ENCODE measurements at regions of chr18 and their contacts with region 1.

Region 1: DNA sequence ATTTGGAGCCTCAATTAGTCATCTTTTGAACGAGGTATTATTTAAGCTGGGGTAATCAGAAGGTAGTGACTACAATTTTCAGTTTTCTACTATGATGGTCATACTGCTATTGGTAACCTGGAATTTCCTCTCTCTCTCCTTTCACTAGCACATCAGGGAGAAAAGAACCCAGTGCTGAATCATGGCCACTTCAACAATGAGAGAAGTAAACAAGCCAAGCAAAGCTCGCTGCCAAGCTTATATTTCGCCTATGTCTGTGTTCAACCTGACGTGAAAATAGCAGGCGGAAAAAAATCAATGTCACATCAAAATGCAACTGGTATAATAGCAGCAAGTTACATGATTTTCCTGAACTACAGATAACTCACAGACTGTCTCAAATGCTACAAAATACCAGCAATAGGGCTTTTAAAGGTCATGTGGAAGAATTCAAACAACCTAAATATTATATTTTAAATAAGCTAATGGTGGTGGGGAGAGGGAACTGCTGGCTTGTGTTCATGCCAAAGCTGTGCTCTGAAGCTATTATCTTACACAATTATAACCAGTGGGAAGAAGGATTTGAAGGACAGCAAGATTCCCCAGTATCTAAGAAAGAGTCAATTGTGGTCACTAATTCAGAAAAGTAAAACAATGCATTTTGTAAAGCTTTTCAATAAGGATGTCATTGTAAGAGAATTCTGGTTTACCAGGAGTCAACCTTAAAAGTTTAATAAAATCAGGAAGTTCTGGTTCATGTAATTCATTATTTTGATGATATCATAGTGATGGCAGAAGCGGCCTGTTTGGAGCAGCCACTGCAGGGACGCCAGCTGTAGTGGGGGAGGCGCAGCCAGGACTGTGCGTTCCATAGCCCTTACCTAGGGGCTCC is 38.0 kb downstream of the RNF152 start:
- DNase-seq: peak in 1 of 3 donors; percentile 56
- ATAC-seq: peak in 1 of 2 donors; percentile 33
- H3K4me3 ChIP-seq: no peak overlapping the region
- H3K27ac ChIP-seq: no peak overlapping the region
- H3K4me1 ChIP-seq: peaks cover 9% of the 10 kb centered on the region
- H3K27me3 ChIP-seq: no peaks in the 10 kb centered on the region

Region 2: DNA sequence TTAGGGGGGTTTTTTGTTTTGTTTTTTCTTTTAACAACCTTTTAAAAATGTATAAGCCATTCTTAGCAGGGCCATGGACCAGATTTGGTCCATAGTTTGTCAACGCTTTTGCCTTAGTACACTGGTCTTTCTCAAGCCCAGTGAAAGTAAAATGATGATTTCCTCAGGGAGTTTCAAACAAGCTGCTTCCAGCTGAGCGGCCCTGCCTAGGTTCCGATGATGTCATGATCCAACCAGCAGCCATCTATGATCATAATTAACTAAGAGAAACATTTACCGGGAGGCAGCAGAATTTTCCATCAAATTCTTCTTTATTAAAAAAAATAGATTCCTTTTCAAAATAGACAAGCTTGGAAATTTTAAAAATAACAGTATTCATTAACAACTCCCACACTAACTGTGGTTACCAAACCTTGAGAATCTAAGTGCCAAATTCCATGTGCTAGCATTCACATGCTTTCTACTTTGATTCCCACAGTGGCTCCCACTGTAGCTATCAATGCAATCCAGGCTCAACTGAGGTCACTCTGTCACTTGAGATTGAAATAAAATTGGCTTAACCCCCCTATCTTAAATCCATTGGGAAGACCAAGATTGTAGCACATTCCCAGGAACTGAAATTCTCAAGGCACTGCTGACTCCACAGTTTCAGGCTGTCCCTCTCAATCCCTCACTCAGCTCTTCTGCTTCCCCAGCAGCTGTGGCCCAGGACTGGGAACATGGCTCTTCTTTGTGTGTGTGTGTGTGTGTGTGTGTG is 110.9 kb before region 1 on chr18:
- intact Hi-C with region 1: loop called in 1 of 4 experiments (anchors 10 kb)
- DNase-seq: peak; percentile 62 to 76 (median 75)
- ATAC-seq: peak; percentile 79 to 81
- H3K4me3 ChIP-seq: no peak overlapping the region
- H3K27ac ChIP-seq: peak overlapping the region; percentile 14
- H3K4me1 ChIP-seq: peaks cover 10% of the 10 kb centered on the region
- H3K27me3 ChIP-seq: no peaks in the 10 kb centered on the region

Measured in right cardiac atrium (tissue), 5 donors.